CD8-positive, alpha-beta T cell (primary cell): ENCODE measurements at regions of chr12 and their contacts with region 1.

Region 1: DNA sequence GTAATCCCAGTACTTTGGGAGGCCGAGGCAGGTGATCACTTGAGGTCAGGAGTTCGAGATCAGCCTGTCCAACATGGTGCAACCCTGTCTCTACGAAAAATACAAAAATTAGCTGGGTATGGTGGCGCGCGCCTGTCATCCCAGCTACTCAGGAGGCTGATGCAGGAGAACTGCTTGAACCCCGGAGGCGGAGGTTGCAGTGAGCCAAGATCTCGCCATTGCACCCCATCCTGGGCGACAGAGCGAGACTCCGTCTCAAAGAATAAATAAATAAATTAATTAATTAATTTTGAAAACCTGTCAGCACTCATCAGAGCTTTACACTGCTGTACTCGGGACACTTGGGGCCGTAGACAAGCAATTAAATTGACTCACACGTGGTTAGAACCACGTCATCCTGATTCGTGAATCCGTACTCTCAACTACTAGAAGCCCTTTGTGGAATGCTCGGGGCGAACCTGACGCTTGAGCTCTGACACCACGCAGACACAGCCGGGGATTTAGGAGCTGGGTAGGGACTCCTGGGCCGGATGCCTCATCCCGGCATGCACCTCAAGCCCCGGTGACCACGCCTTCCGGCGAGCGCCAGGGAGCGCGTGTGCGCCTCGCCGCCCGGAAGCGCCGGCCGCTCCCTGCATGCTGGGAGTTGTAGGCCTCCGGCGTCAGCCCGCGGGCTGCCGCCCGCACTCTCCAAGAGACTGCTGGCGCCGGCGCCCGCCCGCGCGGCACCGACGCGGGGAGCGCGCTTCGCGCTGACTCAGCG is at the start of gene XPOT:
- DNase-seq: peak; percentile 85 to 99 (median 90)
- ATAC-seq: peak; percentile 87
- H3K4me3 ChIP-seq: peak within 1 kb of the TSS; percentile 92 to 98
- H3K4me3 Mint-ChIP-seq: peak within 1 kb of the TSS; percentile 97
- H3K27ac ChIP-seq: peak within 1 kb of the TSS; percentile 79 to 85
- H3K27ac Mint-ChIP-seq: peak within 1 kb of the TSS; percentile 98
- H3K4me1 ChIP-seq: peaks cover 9% of the 10 kb centered on the region
- H3K4me1 Mint-ChIP-seq: peaks cover 28% of the 10 kb centered on the region
- H3K27me3 ChIP-seq: no peaks in the 10 kb centered on the region
- H3K27me3 Mint-ChIP-seq: no peaks in the 10 kb centered on the region
- CTCF ChIP-seq: no peak
- total RNA-seq, gene XPOT: 37.9 to 39.5 TPM

Region 2: GRCh38 chr12:63779498-63780481 is 624.1 kb before region 1 on chr12 and contains the start of gene RXYLT1:
- CTCF ChIA-PET with region 1: no interaction called
- POLR2A ChIA-PET with region 1: no interaction called
- intact Hi-C with region 1: loop called (anchors 1 to 2 kb)
- DNase-seq: peak; percentile 66 to 93 (median 83)
- ATAC-seq: peak; percentile 93
- H3K4me3 ChIP-seq: peak within 1 kb of the TSS; percentile 76 to 79
- H3K4me3 Mint-ChIP-seq: peak within 1 kb of the TSS; percentile 96
- H3K27ac ChIP-seq: peak within 1 kb of the TSS; percentile 74 to 87
- H3K27ac Mint-ChIP-seq: peak within 1 kb of the TSS; percentile 96
- H3K4me1 ChIP-seq: peaks cover 8% of the 10 kb centered on the region
- H3K4me1 Mint-ChIP-seq: peaks cover 32% of the 10 kb centered on the region
- H3K27me3 ChIP-seq: no peaks in the 10 kb centered on the region
- H3K27me3 Mint-ChIP-seq: no peaks in the 10 kb centered on the region
- CTCF ChIP-seq: no peak
- total RNA-seq, gene RXYLT1: 5.5 to 5.8 TPM

Region 3: DNA sequence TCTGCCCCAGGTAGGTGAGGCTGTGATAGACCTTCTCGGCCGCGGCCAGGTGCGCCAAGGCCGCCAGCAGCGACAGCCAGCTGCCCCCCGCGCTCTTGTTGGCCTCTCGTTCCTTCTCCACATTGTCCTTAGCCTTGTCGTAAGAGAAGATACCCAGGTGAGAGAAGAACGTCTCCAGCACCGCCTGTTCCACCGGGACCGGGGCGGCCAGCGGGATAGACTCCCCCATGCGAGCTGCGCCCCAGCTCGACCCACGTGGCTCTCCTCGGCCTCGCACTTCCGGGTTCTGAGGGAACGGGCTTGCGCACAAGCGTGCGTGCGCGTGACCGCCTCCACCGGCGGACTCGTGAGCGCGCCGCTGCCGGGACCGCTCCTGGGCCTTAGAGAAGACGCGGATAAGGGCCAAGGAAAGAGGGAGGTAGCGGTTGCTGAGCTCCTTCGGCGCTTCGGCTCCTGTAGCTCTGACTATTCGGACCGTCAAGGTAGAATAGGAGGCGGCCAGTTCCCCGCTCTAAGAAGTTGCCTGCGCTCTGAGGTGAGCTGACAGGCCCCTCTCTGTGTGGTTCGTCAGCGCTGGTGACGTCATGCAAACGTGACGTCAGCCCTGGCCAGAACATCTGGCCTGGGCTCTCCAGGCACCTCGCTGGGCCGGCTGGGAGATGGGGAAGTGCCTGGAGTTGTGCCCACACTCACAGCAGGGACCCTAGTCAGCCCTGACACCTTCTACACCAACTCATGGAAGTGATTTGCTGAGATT is 181.7 kb before region 1 on chr12 and contains the start of gene KICS2:
- CTCF ChIA-PET with region 1: no interaction called
- POLR2A ChIA-PET with region 1: no interaction called
- intact Hi-C with region 1: loop called (anchors 1 kb)
- DNase-seq: peak; percentile 82 to 97 (median 90)
- ATAC-seq: peak; percentile 82
- H3K4me3 ChIP-seq: peak within 1 kb of the TSS; percentile 67 to 94
- H3K4me3 Mint-ChIP-seq: peak within 1 kb of the TSS; percentile 93
- H3K27ac ChIP-seq: peak within 1 kb of the TSS; percentile 95 to 97
- H3K27ac Mint-ChIP-seq: peak within 1 kb of the TSS; percentile 98
- H3K4me1 ChIP-seq: peaks cover 12% of the 10 kb centered on the region
- H3K4me1 Mint-ChIP-seq: peaks cover 39% of the 10 kb centered on the region
- H3K27me3 ChIP-seq: no peaks in the 10 kb centered on the region
- H3K27me3 Mint-ChIP-seq: peaks cover 8% of the 10 kb centered on the region
- CTCF ChIP-seq: no peak
- total RNA-seq, gene KICS2: 13.9 to 15.5 TPM

Region 4: DNA sequence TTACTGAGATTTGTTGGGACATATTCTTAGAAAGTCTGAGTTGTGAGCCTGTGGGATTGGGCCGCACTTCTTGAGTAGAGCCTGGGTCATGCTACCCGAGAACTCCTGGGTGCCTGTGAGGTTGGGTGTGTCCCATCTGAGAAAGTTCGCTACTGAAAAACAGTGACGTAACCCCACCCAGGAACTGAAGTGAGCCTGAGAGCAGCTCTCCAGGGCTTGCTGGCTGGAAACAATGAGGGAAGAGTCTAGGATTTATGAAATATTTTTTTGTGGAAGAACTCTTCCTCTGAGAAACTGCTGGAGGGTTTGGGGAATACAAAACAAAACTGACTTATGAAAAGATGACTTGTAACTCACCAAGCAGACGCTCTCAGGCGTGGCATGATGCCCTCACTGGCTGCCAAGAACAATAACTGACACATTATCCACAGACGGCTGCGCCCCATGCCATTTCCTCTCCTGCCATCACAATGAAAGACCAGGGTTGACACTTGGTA is 275.6 kb after region 1 on chr12:
- CTCF ChIA-PET with region 1: no interaction called
- POLR2A ChIA-PET with region 1: no interaction called
- intact Hi-C with region 1: loop called in 1 of 2 experiments (anchors 10 kb)
- DNase-seq: peak; percentile 54 to 91 (median 76)
- ATAC-seq: peak; percentile 68
- H3K4me3 ChIP-seq: peak overlapping the region; percentile 22 to 33
- H3K4me3 Mint-ChIP-seq: peak overlapping the region; percentile 67
- H3K27ac ChIP-seq: peak overlapping the region; percentile 71 to 94
- H3K27ac Mint-ChIP-seq: peak overlapping the region; percentile 98
- H3K4me1 ChIP-seq: peaks cover 97% of the 10 kb centered on the region
- H3K4me1 Mint-ChIP-seq: peaks cover 92% of the 10 kb centered on the region
- H3K27me3 ChIP-seq: no peaks in the 10 kb centered on the region
- H3K27me3 Mint-ChIP-seq: no peaks in the 10 kb centered on the region
- CTCF ChIP-seq: no peak

Region 5: GRCh38 chr12:66130277-66131066 is 1726.6 kb after region 1 on chr12 and contains the start of gene LLPH:
- CTCF ChIA-PET with region 1: no interaction called
- POLR2A ChIA-PET with region 1: no interaction called
- intact Hi-C with region 1: loop called in 1 of 2 experiments (anchors 10 kb)
- DNase-seq: peak; percentile 75 to 94 (median 89)
- ATAC-seq: peak; percentile 92
- H3K4me3 ChIP-seq: peak within 1 kb of the TSS; percentile 91 to 97
- H3K4me3 Mint-ChIP-seq: peak within 1 kb of the TSS; percentile 96
- H3K27ac ChIP-seq: peak within 1 kb of the TSS; percentile 86 to 91
- H3K27ac Mint-ChIP-seq: peak within 1 kb of the TSS; percentile 99
- H3K4me1 ChIP-seq: peaks cover 22% of the 10 kb centered on the region
- H3K4me1 Mint-ChIP-seq: peaks cover 59% of the 10 kb centered on the region
- H3K27me3 ChIP-seq: no peaks in the 10 kb centered on the region
- H3K27me3 Mint-ChIP-seq: no peaks in the 10 kb centered on the region
- CTCF ChIP-seq: no peak
- total RNA-seq, gene LLPH: 29.1 to 30.9 TPM